ENCODE measurements at regions of chr12 and their contacts with region 1.

Region 1: GRCh38 chr12:105084251-105085250 is at the start of gene ALDH1L2:
- DNase-seq: peak; percentile 56
- ATAC-seq: peak; percentile 96
- H3K4me3 Mint-ChIP-seq: peak within 1 kb of the TSS; percentile 86
- H3K27ac Mint-ChIP-seq: peak within 1 kb of the TSS; percentile 41
- H3K4me1 Mint-ChIP-seq: peaks cover 9% of the 10 kb centered on the region
- H3K27me3 Mint-ChIP-seq: peaks cover 10% of the 10 kb centered on the region
- CTCF ChIP-seq: no peak
- total RNA-seq, gene ALDH1L2: 5.2 and 6.5 TPM in 2 replicates

Region 2: DNA sequence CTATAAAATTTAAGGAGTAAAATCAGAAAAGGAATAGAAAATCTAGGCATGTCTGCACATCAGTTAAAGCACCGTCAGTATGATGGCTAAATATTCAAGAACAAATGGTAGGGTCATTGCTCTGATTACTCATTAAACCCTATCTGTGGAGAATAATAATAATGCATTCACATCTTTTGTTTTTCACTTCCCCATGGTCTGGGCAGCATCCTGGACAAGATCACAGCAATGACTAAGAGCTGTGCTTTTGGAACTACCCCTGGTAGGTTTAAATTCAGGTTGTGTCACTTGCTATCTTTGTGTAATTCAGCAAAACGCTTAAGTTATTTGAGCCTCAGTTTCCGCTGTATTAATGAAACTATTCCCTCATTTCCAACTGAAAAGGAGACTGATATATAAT is 1621.9 kb before region 1 on chr12:
- CTCF ChIA-PET with region 1: no interaction called
- POLR2A ChIA-PET with region 1: no interaction called
- intact Hi-C with region 1: loop called (anchors 10 kb)
- DNase-seq: no peak
- ATAC-seq: peak; percentile 92
- H3K4me3 Mint-ChIP-seq: no peak overlapping the region
- H3K27ac Mint-ChIP-seq: peak overlapping the region; percentile 7
- H3K4me1 Mint-ChIP-seq: peaks cover 32% of the 10 kb centered on the region
- H3K27me3 Mint-ChIP-seq: no peaks in the 10 kb centered on the region
- CTCF ChIP-seq: no peak